ENCODE measurements at regions of chr9 and their contacts with region 1.

Region 1: DNA sequence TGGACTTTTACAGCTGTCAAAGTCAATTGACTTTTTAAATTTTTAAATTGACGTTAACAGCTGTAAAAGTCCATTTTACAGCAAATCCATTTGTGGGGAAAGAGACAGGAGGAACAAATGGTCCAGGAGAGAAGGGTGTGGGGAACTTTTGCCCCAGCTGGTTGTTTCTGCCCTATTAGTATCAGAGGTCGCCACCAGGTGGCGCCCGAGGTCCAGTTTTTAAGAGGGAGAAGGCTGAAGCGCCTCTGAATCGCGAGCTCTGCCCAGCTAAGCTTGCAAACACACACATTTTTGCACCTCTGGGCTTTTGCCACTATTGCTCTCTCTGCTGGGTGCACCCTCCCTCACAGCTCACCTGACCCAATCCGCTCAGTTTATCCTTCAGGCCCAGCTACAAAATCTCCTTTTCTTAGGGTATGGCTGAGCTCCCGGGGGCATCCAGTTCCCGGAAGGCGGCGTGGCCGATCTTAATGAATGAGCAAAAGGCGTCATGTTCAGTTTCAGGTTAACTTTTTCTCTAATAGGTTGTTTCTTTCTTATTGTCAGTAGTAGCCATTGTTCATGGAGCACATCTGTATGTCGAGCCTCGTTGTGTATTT is 6.3 kb upstream of the TTLL11 start:
- DNase-seq: peak; percentile 64 to 87 (median 80)
- ATAC-seq: peak; percentile 84
- H3K4me3 ChIP-seq: no peak overlapping the region
- H3K4me3 Mint-ChIP-seq: peak overlapping the region; percentile 35
- H3K27ac ChIP-seq: no peak overlapping the region
- H3K27ac Mint-ChIP-seq: no peak overlapping the region
- H3K4me1 ChIP-seq: peaks cover 5% of the 10 kb centered on the region
- H3K4me1 Mint-ChIP-seq: peaks cover 14% of the 10 kb centered on the region
- H3K27me3 ChIP-seq: no peaks in the 10 kb centered on the region
- H3K27me3 Mint-ChIP-seq: no peaks in the 10 kb centered on the region
- CTCF ChIP-seq: peak; percentile 90

Region 2: GRCh38 chr9:121992571-121993212 is 106.7 kb before region 1 on chr9:
- CTCF ChIA-PET with region 1: no interaction called
- POLR2A ChIA-PET with region 1: no interaction called
- intact Hi-C with region 1: no loop called
- DNase-seq: peak; percentile 2 to 73 (median 36)
- ATAC-seq: peak; percentile 49
- H3K4me3 ChIP-seq: no peak overlapping the region
- H3K4me3 Mint-ChIP-seq: no peak overlapping the region
- H3K27ac ChIP-seq: no peak overlapping the region
- H3K27ac Mint-ChIP-seq: no peak overlapping the region
- H3K4me1 ChIP-seq: no peaks in the 10 kb centered on the region
- H3K4me1 Mint-ChIP-seq: no peaks in the 10 kb centered on the region
- H3K27me3 ChIP-seq: no peaks in the 10 kb centered on the region
- H3K27me3 Mint-ChIP-seq: no peaks in the 10 kb centered on the region
- CTCF ChIP-seq: peak; percentile 78

Region 3: DNA sequence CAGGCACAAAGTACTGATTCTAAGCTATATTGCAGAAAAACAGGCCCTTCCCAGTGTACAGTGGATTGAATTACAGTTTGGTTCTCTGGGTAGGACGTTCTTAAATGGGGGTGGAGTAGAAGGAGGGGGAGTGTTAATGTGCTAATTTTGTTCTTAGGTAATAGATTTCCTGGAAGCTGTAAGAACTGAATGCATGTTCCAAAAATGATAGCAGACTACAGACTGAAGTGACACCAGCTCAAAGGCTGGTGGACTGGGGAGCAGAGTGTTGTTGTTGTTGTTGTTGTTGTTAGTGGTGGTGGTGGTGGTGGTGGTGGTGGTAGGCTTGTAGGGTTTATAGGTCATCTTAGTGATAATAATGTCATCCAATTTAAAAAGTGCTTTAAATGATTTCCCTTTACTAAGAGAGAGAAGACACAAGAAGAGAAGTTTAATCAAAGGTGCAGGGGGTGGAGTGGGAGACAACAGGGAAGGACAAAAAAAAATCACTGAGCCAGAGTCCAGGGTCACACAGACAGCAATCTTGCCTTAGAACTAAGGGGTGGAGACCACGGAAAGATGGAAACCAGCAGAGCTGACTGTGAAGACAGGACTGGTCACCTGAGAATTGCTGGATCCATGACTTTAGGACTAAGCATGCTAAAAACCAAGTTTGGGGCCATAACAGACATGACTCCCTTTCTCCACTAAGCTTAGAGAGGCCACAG is 33.3 kb before region 1 on chr9:
- CTCF ChIA-PET with region 1: no interaction called
- POLR2A ChIA-PET with region 1: no interaction called
- intact Hi-C with region 1: no loop called
- DNase-seq: no peak
- ATAC-seq: no peak
- H3K4me3 ChIP-seq: no peak overlapping the region
- H3K4me3 Mint-ChIP-seq: no peak overlapping the region
- H3K27ac ChIP-seq: no peak overlapping the region
- H3K27ac Mint-ChIP-seq: no peak overlapping the region
- H3K4me1 ChIP-seq: no peaks in the 10 kb centered on the region
- H3K4me1 Mint-ChIP-seq: peaks cover 7% of the 10 kb centered on the region
- H3K27me3 ChIP-seq: no peaks in the 10 kb centered on the region
- H3K27me3 Mint-ChIP-seq: no peaks in the 10 kb centered on the region
- CTCF ChIP-seq: no peak

Region 4: GRCh38 chr9:122087406-122088200 is 11.8 kb before region 1 on chr9:
- CTCF ChIA-PET with region 1: interaction called, 54 read pairs
- POLR2A ChIA-PET with region 1: interaction called, 3 read pairs
- intact Hi-C with region 1: no loop called
- DNase-seq: no peak
- ATAC-seq: no peak
- H3K4me3 ChIP-seq: no peak overlapping the region
- H3K4me3 Mint-ChIP-seq: no peak overlapping the region
- H3K27ac ChIP-seq: no peak overlapping the region
- H3K27ac Mint-ChIP-seq: no peak overlapping the region
- H3K4me1 ChIP-seq: peaks cover 14% of the 10 kb centered on the region
- H3K4me1 Mint-ChIP-seq: peaks cover 35% of the 10 kb centered on the region
- H3K27me3 ChIP-seq: no peaks in the 10 kb centered on the region
- H3K27me3 Mint-ChIP-seq: no peaks in the 10 kb centered on the region
- CTCF ChIP-seq: no peak

Region 5: GRCh38 chr9:122125158-122125508 is 25.8 kb after region 1 on chr9:
- CTCF ChIA-PET with region 1: interaction called, 177 read pairs
- POLR2A ChIA-PET with region 1: no interaction called
- intact Hi-C with region 1: loop called (anchors 1 kb)
- DNase-seq: peak; percentile 62 to 87 (median 76)
- ATAC-seq: peak; percentile 83
- H3K4me3 ChIP-seq: no peak overlapping the region
- H3K4me3 Mint-ChIP-seq: peak overlapping the region; percentile 33
- H3K27ac ChIP-seq: no peak overlapping the region
- H3K27ac Mint-ChIP-seq: no peak overlapping the region
- H3K4me1 ChIP-seq: peaks cover 18% of the 10 kb centered on the region
- H3K4me1 Mint-ChIP-seq: peaks cover 21% of the 10 kb centered on the region
- H3K27me3 ChIP-seq: peaks cover 12 to 16% of the 10 kb centered on the region in 2 experiments
- H3K27me3 Mint-ChIP-seq: peaks cover 31% of the 10 kb centered on the region
- CTCF ChIP-seq: peak; percentile 82

Region 6: GRCh38 chr9:122264360-122265148 is 165.2 kb after region 1 on chr9 and contains the starts of genes MRRF and RBM18:
- CTCF ChIA-PET with region 1: interaction called, 10 read pairs
- POLR2A ChIA-PET with region 1: no interaction called
- intact Hi-C with region 1: no loop called
- DNase-seq: peak; percentile 80 to 95 (median 87)
- ATAC-seq: peak; percentile 84
- H3K4me3 ChIP-seq: peak within 1 kb of the TSS; percentile 79 to 91
- H3K4me3 Mint-ChIP-seq: peak within 1 kb of the TSS; percentile 95
- H3K27ac ChIP-seq: peak within 1 kb of the TSS; percentile 95 to 99
- H3K27ac Mint-ChIP-seq: peak within 1 kb of the TSS; percentile 98
- H3K4me1 ChIP-seq: peaks cover 38% of the 10 kb centered on the region
- H3K4me1 Mint-ChIP-seq: peaks cover 60% of the 10 kb centered on the region
- H3K27me3 ChIP-seq: no peaks in the 10 kb centered on the region
- H3K27me3 Mint-ChIP-seq: no peaks in the 10 kb centered on the region
- CTCF ChIP-seq: no peak
- total RNA-seq, gene MRRF: 22.9 to 23.2 TPM
- total RNA-seq, gene RBM18: 34.0 to 38.9 TPM

Region 7: DNA sequence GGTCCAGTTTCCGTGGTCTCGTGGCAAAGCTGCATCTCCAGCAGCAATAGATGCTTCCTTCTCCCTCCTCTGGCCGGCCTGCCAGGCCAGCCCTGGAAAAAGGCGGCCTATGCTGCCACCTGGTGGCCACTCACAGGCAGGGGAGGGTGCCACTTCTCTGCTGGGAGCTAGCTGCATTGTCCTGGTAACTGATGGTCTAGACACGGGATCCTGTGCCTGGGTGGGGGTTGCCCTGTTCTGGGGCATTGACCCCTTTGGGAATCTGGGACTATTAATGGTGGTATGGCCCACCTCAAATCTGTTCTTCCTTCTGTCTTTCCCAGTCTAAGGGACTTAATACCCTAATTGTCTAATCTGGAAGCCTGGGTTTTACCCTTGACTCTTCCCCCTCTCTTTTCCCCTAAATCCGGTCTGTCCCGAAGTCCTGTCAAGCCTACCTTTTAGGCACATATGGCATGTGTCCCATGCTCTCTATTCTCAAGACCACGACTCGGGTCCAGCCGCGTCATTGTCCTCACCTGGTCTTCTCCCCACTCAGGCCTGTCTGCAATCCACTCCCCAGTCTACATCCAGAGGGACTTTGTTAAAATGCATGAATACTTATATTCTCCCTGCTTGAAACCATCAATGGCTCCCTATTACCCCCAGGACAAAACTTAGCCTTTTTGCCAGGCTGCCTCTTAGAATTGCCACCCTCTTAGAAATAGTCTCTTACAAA is 251.4 kb after region 1 on chr9:
- CTCF ChIA-PET with region 1: interaction called, 144 read pairs
- POLR2A ChIA-PET with region 1: interaction called, 5 read pairs
- intact Hi-C with region 1: loop called (anchors 1 kb)
- DNase-seq: peak; percentile 58 to 89 (median 76)
- ATAC-seq: peak; percentile 82
- H3K4me3 ChIP-seq: no peak overlapping the region
- H3K4me3 Mint-ChIP-seq: no peak overlapping the region
- H3K27ac ChIP-seq: no peak overlapping the region
- H3K27ac Mint-ChIP-seq: no peak overlapping the region
- H3K4me1 ChIP-seq: peaks cover 21% of the 10 kb centered on the region
- H3K4me1 Mint-ChIP-seq: peaks cover 27% of the 10 kb centered on the region
- H3K27me3 ChIP-seq: peaks cover 0 to 5% of the 10 kb centered on the region in 2 experiments
- H3K27me3 Mint-ChIP-seq: peaks cover 21% of the 10 kb centered on the region
- CTCF ChIP-seq: peak; percentile 97

Region 8: DNA sequence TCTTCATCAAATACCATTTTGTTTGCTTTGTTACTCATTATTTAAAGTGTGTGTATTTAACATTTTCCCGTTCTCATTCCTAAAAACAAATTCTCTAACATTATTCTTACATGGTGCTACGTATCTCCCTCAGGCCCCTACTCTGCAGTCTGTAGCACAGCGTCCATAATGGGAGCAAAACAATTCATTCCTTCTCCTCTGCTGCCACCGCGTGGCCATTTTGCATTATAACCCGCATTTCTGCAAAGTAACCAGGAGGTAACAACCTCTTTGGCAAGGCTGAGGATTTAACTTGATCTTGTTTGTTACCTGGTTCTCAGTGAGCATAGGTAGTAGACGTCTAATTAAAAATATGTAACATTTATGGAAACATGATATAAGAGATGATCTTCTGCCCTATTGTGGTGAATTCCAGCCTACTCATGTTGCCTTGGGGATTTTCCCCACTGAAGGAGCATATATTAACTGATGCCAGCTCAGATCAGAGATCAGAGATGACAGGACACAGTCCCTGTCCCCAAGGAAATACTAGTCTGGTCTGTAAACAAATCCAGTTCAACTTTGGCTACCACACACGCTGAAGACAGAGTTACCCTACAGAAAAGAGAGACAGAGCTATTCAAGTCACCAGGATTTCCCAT is 711.1 kb after region 1 on chr9:
- CTCF ChIA-PET with region 1: interaction called, 30 read pairs
- POLR2A ChIA-PET with region 1: no interaction called
- intact Hi-C with region 1: loop called (anchors 1 kb)
- DNase-seq: peak; percentile 50 to 86 (median 77)
- ATAC-seq: peak; percentile 97
- H3K4me3 ChIP-seq: no peak overlapping the region
- H3K4me3 Mint-ChIP-seq: no peak overlapping the region
- H3K27ac ChIP-seq: no peak overlapping the region
- H3K27ac Mint-ChIP-seq: no peak overlapping the region
- H3K4me1 ChIP-seq: peaks cover 10% of the 10 kb centered on the region
- H3K4me1 Mint-ChIP-seq: peaks cover 18% of the 10 kb centered on the region
- H3K27me3 ChIP-seq: no peaks in the 10 kb centered on the region
- H3K27me3 Mint-ChIP-seq: no peaks in the 10 kb centered on the region
- CTCF ChIP-seq: peak; percentile 95

Measured in CD8-positive, alpha-beta T cell (primary cell).